MCF 10A (cell line): ENCODE measurements at regions of chr7 and their contacts with region 1.

Region 1: DNA sequence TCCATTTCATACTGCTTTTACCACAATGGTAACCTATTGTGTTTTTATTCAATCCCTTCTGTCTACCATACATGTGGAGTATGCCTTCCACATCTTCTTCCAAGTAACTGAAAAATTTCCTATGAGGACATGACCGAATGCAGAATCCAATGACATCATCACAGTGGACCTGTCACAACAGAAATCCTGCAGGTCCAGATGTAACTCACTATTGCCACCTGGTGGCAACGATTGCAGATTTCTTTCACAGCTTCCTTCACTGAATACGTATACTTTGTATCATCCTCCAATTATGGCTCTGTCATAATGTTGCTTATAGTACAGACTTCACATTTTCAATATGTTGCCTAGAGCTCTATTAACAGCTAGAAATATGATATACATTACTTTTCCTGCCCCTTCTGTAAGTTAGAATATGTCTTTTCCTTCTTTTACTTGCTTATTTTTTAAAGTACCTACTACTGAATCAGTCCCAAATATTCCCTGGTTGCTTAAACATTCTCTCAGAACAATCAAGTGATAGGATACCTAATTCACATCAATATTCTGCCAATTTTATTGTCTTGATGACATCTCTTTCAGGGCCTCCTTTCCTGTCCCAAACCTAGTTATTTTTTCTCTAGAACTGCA is 45.4 kb downstream of the SLC13A1 start:
- DNase-seq: peak; percentile 92
- H3K4me3 Mint-ChIP-seq: no peak overlapping the region
- H3K27ac Mint-ChIP-seq: no peak overlapping the region
- H3K4me1 Mint-ChIP-seq: peaks cover 6% of the 10 kb centered on the region
- H3K27me3 Mint-ChIP-seq: no peaks in the 10 kb centered on the region
- CTCF ChIP-seq: peak; percentile 77

Region 2: DNA sequence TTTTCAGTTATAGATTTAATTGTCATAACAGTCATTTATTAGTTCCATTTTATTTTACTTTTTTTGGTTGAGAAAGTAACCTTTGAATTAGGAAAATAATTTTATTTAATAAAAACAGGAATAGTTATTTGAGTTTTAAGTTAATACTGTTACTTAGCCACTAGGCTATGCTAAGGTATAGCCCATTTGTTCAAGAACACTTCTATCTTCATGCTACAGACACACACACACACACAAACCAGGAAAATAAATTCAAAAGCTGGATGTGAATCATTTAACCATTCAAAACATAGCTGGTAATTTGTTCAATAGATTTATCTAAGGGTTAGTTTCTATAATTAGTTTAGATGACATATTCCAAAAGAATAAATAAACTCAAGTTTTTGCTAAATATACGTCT is 603.8 kb before region 1 on chr7:
- CTCF ChIA-PET with region 1: no interaction called
- POLR2A ChIA-PET with region 1: no interaction called
- intact Hi-C with region 1: loop called (anchors 1 kb)
- DNase-seq: no peak
- H3K4me3 Mint-ChIP-seq: no peak overlapping the region
- H3K27ac Mint-ChIP-seq: no peak overlapping the region
- H3K4me1 Mint-ChIP-seq: no peaks in the 10 kb centered on the region
- H3K27me3 Mint-ChIP-seq: no peaks in the 10 kb centered on the region
- CTCF ChIP-seq: no peak

Region 3: DNA sequence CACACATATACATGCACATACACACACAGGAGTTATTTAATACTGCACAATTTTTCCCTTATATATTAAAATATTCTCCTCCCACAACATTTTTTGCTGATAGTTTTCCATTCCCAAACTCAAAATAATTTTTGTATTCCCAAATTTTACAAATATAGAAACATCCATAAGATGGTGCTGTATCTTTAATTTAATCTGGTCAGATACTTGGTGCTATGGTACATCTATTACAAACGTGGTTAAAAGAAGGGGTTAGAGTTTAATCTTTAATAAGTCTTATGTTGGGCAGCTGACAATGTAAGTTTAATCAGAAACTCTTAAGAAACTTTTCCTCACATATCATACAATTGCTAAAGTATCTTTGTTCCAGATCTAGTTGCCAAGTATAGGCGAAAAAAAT is 257.8 kb before region 1 on chr7:
- CTCF ChIA-PET with region 1: interaction called, 11 read pairs
- POLR2A ChIA-PET with region 1: interaction called, 3 read pairs
- intact Hi-C with region 1: loop called (anchors 1 kb)
- DNase-seq: peak; percentile 6
- H3K4me3 Mint-ChIP-seq: no peak overlapping the region
- H3K27ac Mint-ChIP-seq: no peak overlapping the region
- H3K4me1 Mint-ChIP-seq: no peaks in the 10 kb centered on the region
- H3K27me3 Mint-ChIP-seq: no peaks in the 10 kb centered on the region
- CTCF ChIP-seq: peak; percentile 5

Region 4: GRCh38 chr7:123143252-123144006 is 10.9 kb before region 1 on chr7:
- CTCF ChIA-PET with region 1: interaction called, 23 read pairs
- POLR2A ChIA-PET with region 1: no interaction called
- intact Hi-C with region 1: no loop called
- DNase-seq: no peak
- H3K4me3 Mint-ChIP-seq: no peak overlapping the region
- H3K27ac Mint-ChIP-seq: no peak overlapping the region
- H3K4me1 Mint-ChIP-seq: no peaks in the 10 kb centered on the region
- H3K27me3 Mint-ChIP-seq: peaks cover 23% of the 10 kb centered on the region
- CTCF ChIP-seq: no peak